Cardiac septum (tissue), 1 donor: ENCODE measurements at regions of chr3 and their contacts with region 1.

Region 1: GRCh38 chr3:17412950-17413530 is 329.4 kb downstream of the TBC1D5 start:
- DNase-seq: no peak

Region 2: DNA sequence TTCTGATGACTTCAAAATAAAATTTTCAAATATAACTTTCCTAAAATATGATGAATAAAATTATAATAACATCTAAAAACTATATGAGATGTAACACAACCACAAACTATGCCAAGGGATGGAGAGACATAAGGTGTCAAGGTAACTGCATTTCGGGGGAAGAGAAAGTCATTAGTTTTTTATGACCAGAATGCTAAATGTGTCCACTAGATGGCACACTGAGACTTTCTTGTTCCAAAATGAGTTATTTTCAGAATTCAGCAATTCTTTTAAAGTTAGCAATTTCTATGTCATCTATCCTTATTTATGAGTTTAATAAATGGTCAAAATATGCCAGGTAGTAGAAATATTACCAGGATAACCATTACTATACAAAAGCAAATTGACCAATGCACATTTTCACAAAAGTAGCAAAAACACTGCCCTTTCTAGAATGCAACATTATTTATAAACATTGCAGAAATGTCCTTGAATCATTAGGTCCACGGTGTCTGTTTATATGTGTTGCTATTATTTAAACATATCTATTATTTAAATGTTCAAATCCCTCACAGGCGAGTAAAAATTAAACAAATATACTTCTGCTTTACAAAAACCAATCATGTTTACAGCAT is 154.1 kb before region 1 on chr3:
- intact Hi-C with region 1: loop called (anchors 1 kb)
- DNase-seq: no peak

Region 3: DNA sequence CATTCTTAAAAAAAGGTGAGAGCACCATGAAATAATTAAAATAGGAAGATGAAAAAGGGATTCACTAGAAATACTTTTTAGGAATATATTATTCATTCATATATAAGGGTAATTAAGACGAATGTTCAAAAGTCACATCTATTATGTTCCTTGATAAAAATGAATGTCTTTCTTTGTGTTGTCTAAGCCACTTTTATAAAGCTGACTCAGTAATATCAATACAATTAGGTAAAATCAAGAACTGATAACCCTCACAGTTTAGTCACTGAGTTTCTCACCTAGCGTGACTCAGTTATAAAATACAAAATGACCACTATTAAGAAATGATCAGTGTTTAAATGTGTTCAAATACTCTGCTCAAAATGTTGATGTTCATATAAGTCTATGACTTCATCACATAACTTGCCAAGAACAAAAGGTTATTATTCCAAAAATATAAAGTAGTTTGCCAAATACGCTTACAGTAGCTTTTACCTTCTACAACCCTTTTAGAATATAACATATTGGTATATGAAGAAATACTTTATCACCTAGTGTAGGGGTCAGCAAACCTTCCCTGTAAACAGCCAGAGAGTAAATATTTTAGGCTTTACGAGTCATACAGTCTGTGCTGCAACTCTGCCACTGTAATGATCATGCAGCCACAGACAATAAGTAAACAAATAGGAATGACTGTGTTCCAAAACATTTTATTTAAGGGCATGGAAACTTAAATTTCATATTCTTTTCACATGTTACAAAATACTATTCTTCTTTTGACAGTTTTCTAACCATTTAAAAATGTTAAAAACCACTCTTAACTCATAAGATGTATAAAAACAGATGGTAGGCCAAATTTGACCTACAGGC is 40.5 kb before region 1 on chr3:
- intact Hi-C with region 1: no loop called
- DNase-seq: no peak

Region 4: DNA sequence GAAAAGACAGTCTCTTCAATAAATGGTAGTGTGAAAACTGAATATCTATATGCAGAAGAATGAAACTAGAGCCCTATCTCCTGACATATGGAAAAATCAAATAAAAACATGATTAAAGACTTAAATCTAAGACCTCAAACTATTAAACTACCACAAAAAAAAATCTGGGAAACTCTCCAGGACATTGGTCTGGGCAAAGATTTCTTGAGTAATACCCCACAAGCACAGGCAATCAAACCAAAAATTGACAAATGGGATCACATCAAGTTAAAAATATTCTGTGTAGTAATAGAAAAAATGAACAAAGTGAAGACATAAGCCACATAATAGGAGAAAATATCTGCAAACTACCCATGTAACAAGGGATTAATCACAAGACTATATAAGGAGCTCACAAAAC is 43.0 kb after region 1 on chr3:
- intact Hi-C with region 1: no loop called
- DNase-seq: no peak